ENCODE measurements at regions of chr15 and their contacts with region 1.

Region 1: GRCh38 chr15:70701891-70702568 is 61.3 kb downstream of the UACA start:
- DNase-seq: peak; percentile 57

Region 2: GRCh38 chr15:70713714-70714414 is 11.8 kb after region 1 on chr15:
- CTCF ChIA-PET with region 1: interaction called, 9 read pairs
- POLR2A ChIA-PET with region 1: interaction called, 16 read pairs
- DNase-seq: no peak

Measured in HEK293T (cell line).